ENCODE measurements at regions of chr12 and their contacts with region 1.

Region 1: DNA sequence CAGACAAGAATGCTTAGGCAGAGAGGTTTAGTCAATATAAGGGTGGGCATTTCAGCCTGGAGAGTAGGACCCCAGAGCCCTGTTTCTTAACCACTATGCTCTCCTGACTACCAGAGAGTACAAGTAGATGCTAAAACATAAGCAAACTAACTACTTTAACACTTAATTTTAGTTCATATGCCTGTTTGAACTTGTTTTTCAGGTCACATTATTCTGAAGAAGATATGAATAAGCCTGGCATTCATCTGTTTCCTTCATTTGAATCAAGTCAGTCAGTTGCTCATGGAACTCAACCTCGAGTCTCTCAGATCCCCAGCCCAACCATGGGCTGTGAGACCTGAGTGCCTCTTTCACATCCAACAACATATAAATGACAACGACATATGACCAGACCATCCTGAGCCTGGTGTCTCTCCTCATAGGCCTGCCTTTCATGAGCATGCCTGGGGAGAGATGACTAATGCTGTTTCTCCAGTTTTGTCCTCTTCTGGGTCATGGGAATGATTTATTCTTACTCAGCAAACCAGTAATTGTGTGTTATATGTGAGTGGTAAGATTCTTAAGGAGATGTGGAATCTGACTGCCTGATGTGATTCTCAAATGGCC is 251.1 kb upstream of the BTG1 start:
- DNase-seq: no peak
- H3K4me3 ChIP-seq: no peak overlapping the region
- H3K4me3 Mint-ChIP-seq: peak overlapping the region in 6 of 8 donors; percentile 19 to 81 (median 57)
- H3K27ac ChIP-seq: peak overlapping the region; percentile 72
- H3K27ac Mint-ChIP-seq: peak overlapping the region; percentile 93 to 98 (median 97)
- H3K4me1 ChIP-seq: peaks cover 93% of the 10 kb centered on the region
- H3K4me1 Mint-ChIP-seq: peaks cover 74 to 100% (median 89%) of the 10 kb centered on the region in 4 donors
- H3K27me3 ChIP-seq: no peaks in the 10 kb centered on the region
- H3K27me3 Mint-ChIP-seq: no peaks in the 10 kb centered on the region

Region 2: GRCh38 chr12:92136965-92137721 is 259.6 kb before region 1 on chr12:
- CTCF ChIA-PET with region 1: no interaction called
- POLR2A ChIA-PET with region 1: interaction called, 630 read pairs
- intact Hi-C with region 1: no loop called
- DNase-seq: no peak
- H3K4me3 ChIP-seq: peak overlapping the region; percentile 83 to 89
- H3K4me3 Mint-ChIP-seq: peak overlapping the region; percentile 87 to 100 (median 100)
- H3K27ac ChIP-seq: peak overlapping the region; percentile 86
- H3K27ac Mint-ChIP-seq: peak overlapping the region; percentile 83 to 100 (median 99)
- H3K4me1 ChIP-seq: peaks cover 52% of the 10 kb centered on the region
- H3K4me1 Mint-ChIP-seq: peaks cover 43 to 59% (median 49%) of the 10 kb centered on the region in 4 donors
- H3K27me3 ChIP-seq: no peaks in the 10 kb centered on the region
- H3K27me3 Mint-ChIP-seq: no peaks in the 10 kb centered on the region

Region 3: DNA sequence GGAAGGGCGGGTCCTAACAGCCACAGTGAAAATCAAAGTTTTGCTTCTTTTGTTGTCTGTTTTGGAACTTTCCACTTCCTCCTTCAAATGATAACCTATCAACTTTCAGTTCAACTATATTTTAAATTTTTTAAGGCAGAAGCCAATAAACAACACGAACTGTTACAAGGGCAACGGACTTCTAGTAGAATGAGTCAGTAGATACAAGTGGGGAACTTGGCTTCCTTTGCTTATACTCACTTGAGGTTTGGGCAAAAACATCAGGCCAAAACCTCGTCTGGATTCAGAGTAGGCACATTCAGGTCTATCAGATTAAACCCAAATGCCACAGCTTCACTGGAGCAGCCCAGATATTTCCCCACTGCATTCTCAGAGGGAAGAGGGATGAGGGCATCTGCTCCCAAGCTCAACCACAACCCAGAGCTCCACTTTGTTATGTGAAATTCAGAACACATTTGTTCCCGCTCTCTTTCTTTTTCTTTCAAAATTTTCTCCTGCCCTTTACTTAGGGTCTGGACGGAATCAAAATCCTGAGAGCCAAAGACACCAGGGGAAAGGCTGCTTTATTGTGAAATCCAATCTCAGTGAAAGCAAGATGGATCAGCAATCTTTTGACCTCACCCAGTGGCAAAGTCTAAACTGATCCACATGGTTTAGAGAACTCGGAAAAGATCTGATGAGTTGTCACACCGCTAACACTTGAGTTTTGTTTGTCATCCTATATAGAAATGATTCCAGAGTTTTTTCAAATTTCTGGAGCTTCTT is 98.6 kb before region 1 on chr12:
- CTCF ChIA-PET with region 1: no interaction called
- POLR2A ChIA-PET with region 1: interaction called, 14 read pairs
- intact Hi-C with region 1: loop called (anchors 2 kb)
- DNase-seq: peak in 4 of 5 donors; percentile 33 to 49 (median 46)
- H3K4me3 ChIP-seq: no peak overlapping the region
- H3K4me3 Mint-ChIP-seq: peak overlapping the region; percentile 28 to 78 (median 72)
- H3K27ac ChIP-seq: no peak overlapping the region
- H3K27ac Mint-ChIP-seq: peak overlapping the region in 5 of 7 donors; percentile 76 to 93 (median 93)
- H3K4me1 ChIP-seq: peaks cover 40% of the 10 kb centered on the region
- H3K4me1 Mint-ChIP-seq: peaks cover 21 to 33% (median 28%) of the 10 kb centered on the region in 4 donors
- H3K27me3 ChIP-seq: no peaks in the 10 kb centered on the region
- H3K27me3 Mint-ChIP-seq: no peaks in the 10 kb centered on the region

Region 4: GRCh38 chr12:92462049-92462448 is 65.3 kb after region 1 on chr12:
- CTCF ChIA-PET with region 1: no interaction called
- POLR2A ChIA-PET with region 1: interaction called, 10 read pairs
- intact Hi-C with region 1: no loop called
- DNase-seq: peak in 3 of 5 donors; percentile 10 to 28 (median 15)
- H3K4me3 ChIP-seq: no peak overlapping the region
- H3K4me3 Mint-ChIP-seq: peak overlapping the region in 6 of 8 donors; percentile 15 to 59 (median 46)
- H3K27ac ChIP-seq: peak overlapping the region; percentile 36
- H3K27ac Mint-ChIP-seq: peak overlapping the region; percentile 48 to 80 (median 76)
- H3K4me1 ChIP-seq: peaks cover 45% of the 10 kb centered on the region
- H3K4me1 Mint-ChIP-seq: peaks cover 22 to 46% (median 27%) of the 10 kb centered on the region in 4 donors
- H3K27me3 ChIP-seq: no peaks in the 10 kb centered on the region
- H3K27me3 Mint-ChIP-seq: no peaks in the 10 kb centered on the region

Region 5: GRCh38 chr12:92556141-92556540 is 159.4 kb after region 1 on chr12:
- CTCF ChIA-PET with region 1: no interaction called
- POLR2A ChIA-PET with region 1: interaction called, 10 read pairs
- intact Hi-C with region 1: loop called (anchors 5 kb)
- DNase-seq: peak in 4 of 5 donors; percentile 22 to 34 (median 28)
- H3K4me3 ChIP-seq: peak overlapping the region; percentile 24 to 27
- H3K4me3 Mint-ChIP-seq: peak overlapping the region; percentile 31 to 79 (median 60)
- H3K27ac ChIP-seq: peak overlapping the region; percentile 30
- H3K27ac Mint-ChIP-seq: peak overlapping the region; percentile 49 to 96 (median 81)
- H3K4me1 ChIP-seq: peaks cover 50% of the 10 kb centered on the region
- H3K4me1 Mint-ChIP-seq: peaks cover 25 to 53% (median 40%) of the 10 kb centered on the region in 4 donors
- H3K27me3 ChIP-seq: no peaks in the 10 kb centered on the region
- H3K27me3 Mint-ChIP-seq: no peaks in the 10 kb centered on the region

Measured in CD4-positive, alpha-beta memory T cell (primary cell).